ENCODE measurements at regions of chr1 and their contacts with region 1.

Region 1: GRCh38 chr1:110780600-110781484 is 92.1 kb upstream of the CD53 start:
- DNase-seq: peak; percentile 55 to 92 (median 70)
- ATAC-seq: peak; percentile 75
- H3K4me3 ChIP-seq: no peak overlapping the region
- H3K4me3 Mint-ChIP-seq: no peak overlapping the region
- H3K27ac ChIP-seq: no peak overlapping the region
- H3K27ac Mint-ChIP-seq: no peak overlapping the region
- H3K4me1 ChIP-seq: peaks cover 41% of the 10 kb centered on the region
- H3K4me1 Mint-ChIP-seq: peaks cover 56% of the 10 kb centered on the region
- H3K27me3 ChIP-seq: no peaks in the 10 kb centered on the region
- H3K27me3 Mint-ChIP-seq: no peaks in the 10 kb centered on the region
- CTCF ChIP-seq: peak; percentile 70

Region 2: DNA sequence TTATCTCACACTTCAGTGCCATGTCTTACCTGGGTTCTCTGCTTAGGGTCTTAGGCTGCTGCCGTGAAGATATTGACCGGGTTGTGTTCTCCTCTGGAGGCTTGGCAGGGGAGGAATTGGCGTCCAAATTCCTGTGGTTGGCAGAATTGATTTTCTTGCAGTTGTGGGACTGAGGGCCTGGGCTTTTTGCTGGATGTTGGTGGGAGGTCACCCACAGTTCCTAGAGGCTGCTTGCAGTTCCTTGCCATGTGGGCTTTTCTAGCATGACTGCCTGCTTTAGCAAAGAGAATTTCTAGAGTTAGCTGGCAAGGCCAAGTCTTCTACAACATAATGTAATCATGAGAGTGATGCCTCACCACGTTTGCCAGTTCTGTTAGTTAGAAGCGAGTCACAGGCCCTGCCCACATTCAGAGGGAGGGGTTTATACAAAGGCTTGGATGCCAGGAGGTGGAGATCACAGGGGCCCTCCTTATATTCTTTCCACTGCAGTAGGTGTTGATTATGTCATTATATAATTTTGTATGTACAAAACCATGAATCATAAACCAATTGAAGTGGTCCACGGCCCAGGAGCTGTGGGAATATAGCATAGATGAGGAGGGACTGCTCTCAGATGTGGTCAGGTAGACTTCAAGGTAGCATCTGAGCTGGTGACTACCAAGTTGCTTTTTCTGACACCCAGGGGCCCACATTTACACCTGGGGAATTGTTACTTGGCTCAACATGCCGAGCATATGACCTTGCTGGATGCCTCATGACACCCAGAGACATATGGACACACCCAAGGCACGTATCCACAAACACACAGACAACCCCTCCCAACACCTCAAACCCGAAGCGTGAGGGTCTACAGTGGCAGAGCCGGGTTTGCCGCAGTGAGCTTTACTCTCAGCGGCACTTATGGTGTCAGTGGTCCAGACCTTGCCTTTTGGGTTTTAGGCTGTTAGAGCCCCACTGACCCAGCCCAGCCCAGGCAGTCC is 661.9 kb before region 1 on chr1:
- CTCF ChIA-PET with region 1: no interaction called
- POLR2A ChIA-PET with region 1: no interaction called
- intact Hi-C with region 1: no loop called
- DNase-seq: no peak
- ATAC-seq: no peak
- H3K4me3 ChIP-seq: no peak overlapping the region
- H3K4me3 Mint-ChIP-seq: no peak overlapping the region
- H3K27ac ChIP-seq: no peak overlapping the region
- H3K27ac Mint-ChIP-seq: no peak overlapping the region
- H3K4me1 ChIP-seq: no peaks in the 10 kb centered on the region
- H3K4me1 Mint-ChIP-seq: peaks cover 4% of the 10 kb centered on the region
- H3K27me3 ChIP-seq: peaks cover 7 to 13% of the 10 kb centered on the region in 2 experiments
- H3K27me3 Mint-ChIP-seq: peaks cover 17% of the 10 kb centered on the region
- CTCF ChIP-seq: no peak

Region 3: GRCh38 chr1:110524311-110525251 is 256.3 kb before region 1 on chr1:
- CTCF ChIA-PET with region 1: no interaction called
- POLR2A ChIA-PET with region 1: no interaction called
- intact Hi-C with region 1: loop called (anchors 1 kb)
- DNase-seq: peak; percentile 11 to 76 (median 30)
- ATAC-seq: peak; percentile 66
- H3K4me3 ChIP-seq: no peak overlapping the region
- H3K4me3 Mint-ChIP-seq: no peak overlapping the region
- H3K27ac ChIP-seq: no peak overlapping the region
- H3K27ac Mint-ChIP-seq: no peak overlapping the region
- H3K4me1 ChIP-seq: peaks cover 8% of the 10 kb centered on the region
- H3K4me1 Mint-ChIP-seq: no peaks in the 10 kb centered on the region
- H3K27me3 ChIP-seq: peaks cover 0 to 10% of the 10 kb centered on the region in 2 experiments
- H3K27me3 Mint-ChIP-seq: peaks cover 38% of the 10 kb centered on the region
- CTCF ChIP-seq: peak; percentile 58

Region 4: DNA sequence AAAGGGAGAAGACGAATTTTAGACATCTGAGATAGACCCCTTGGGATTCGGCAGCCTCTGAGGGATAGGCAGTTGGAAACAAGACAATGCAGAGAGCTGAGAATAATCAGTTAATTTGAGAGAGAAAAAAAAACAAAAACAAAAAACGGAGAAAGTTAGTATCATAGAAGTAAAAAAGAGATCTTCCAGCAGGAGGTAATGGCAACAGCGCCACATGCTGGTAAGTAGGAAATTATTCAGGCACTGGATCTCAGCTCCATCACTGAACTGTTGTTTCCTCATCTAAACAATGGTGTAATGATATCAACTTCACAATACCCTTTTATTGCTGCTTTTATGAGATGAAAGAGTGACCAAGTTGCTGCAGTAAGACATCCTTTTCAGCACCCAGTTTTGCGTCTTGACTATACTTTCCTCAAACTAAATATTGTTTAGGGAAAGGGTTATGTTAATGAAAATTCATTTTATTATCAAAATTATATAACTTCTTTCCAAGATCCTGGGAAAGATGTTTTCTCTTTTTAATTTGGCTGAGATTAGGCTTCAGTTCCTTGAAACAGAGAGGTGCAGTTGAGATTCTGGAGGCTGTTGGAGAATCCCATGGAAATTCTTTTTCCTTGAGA is 14.7 kb before region 1 on chr1:
- CTCF ChIA-PET with region 1: interaction called, 43 read pairs
- POLR2A ChIA-PET with region 1: interaction called, 3 read pairs
- intact Hi-C with region 1: loop called in 1 of 2 experiments (anchors 2 kb)
- DNase-seq: peak; percentile 22 to 87 (median 44)
- ATAC-seq: peak; percentile 82
- H3K4me3 ChIP-seq: no peak overlapping the region
- H3K4me3 Mint-ChIP-seq: no peak overlapping the region
- H3K27ac ChIP-seq: no peak overlapping the region
- H3K27ac Mint-ChIP-seq: no peak overlapping the region
- H3K4me1 ChIP-seq: peaks cover 4% of the 10 kb centered on the region
- H3K4me1 Mint-ChIP-seq: peaks cover 5% of the 10 kb centered on the region
- H3K27me3 ChIP-seq: no peaks in the 10 kb centered on the region
- H3K27me3 Mint-ChIP-seq: peaks cover 5% of the 10 kb centered on the region
- CTCF ChIP-seq: peak; percentile 93

Region 5: GRCh38 chr1:110872745-110873720 is 92.2 kb after region 1 on chr1 and contains the start of gene CD53:
- CTCF ChIA-PET with region 1: interaction called, 6 read pairs
- POLR2A ChIA-PET with region 1: interaction called, 106 read pairs
- intact Hi-C with region 1: loop called (anchors 5 kb)
- DNase-seq: peak in 12 of 14 experiments; percentile 24 to 90 (median 50)
- ATAC-seq: peak; percentile 69
- H3K4me3 ChIP-seq: peak within 1 kb of the TSS; percentile 66
- H3K4me3 Mint-ChIP-seq: peak within 1 kb of the TSS; percentile 91
- H3K27ac ChIP-seq: peak within 1 kb of the TSS; percentile 92 to 93
- H3K27ac Mint-ChIP-seq: peak within 1 kb of the TSS; percentile 92
- H3K4me1 ChIP-seq: peaks cover 32% of the 10 kb centered on the region
- H3K4me1 Mint-ChIP-seq: peaks cover 65% of the 10 kb centered on the region
- H3K27me3 ChIP-seq: no peaks in the 10 kb centered on the region
- H3K27me3 Mint-ChIP-seq: no peaks in the 10 kb centered on the region
- CTCF ChIP-seq: no peak
- total RNA-seq, gene CD53: 169 to 176 TPM

Region 6: DNA sequence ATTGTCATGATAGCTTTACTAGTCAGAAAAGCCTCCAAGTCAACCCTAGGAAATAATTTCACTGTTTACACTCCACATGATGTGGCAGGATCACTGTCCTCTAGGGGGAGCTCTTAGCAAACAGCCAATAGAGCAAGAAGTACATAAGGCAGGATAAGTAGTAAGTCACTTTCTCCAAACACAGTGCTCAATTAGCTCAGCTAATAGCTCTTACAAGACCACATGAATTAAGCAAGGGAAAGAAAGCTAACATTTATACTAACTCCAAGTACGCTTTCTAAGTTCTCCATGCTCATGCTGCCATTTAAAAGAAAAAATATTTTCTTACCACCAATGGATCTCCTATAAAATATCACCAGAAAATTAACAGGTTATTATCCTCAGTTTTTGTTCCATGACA is 249.7 kb after region 1 on chr1:
- CTCF ChIA-PET with region 1: interaction called, 3 read pairs
- POLR2A ChIA-PET with region 1: no interaction called
- intact Hi-C with region 1: loop called in 1 of 2 experiments (anchors 5 kb)
- DNase-seq: peak in 13 of 14 experiments; percentile 7 to 79 (median 29)
- ATAC-seq: no peak
- H3K4me3 ChIP-seq: no peak overlapping the region
- H3K4me3 Mint-ChIP-seq: no peak overlapping the region
- H3K27ac ChIP-seq: no peak overlapping the region
- H3K27ac Mint-ChIP-seq: no peak overlapping the region
- H3K4me1 ChIP-seq: no peaks in the 10 kb centered on the region
- H3K4me1 Mint-ChIP-seq: peaks cover 5% of the 10 kb centered on the region
- H3K27me3 ChIP-seq: no peaks in the 10 kb centered on the region
- H3K27me3 Mint-ChIP-seq: peaks cover 17% of the 10 kb centered on the region
- CTCF ChIP-seq: peak; percentile 96

Measured in CD4-positive, alpha-beta T cell (primary cell).